Calu3 (cell line): ENCODE measurements at regions of chr1 and their contacts with region 1.

Region 1: DNA sequence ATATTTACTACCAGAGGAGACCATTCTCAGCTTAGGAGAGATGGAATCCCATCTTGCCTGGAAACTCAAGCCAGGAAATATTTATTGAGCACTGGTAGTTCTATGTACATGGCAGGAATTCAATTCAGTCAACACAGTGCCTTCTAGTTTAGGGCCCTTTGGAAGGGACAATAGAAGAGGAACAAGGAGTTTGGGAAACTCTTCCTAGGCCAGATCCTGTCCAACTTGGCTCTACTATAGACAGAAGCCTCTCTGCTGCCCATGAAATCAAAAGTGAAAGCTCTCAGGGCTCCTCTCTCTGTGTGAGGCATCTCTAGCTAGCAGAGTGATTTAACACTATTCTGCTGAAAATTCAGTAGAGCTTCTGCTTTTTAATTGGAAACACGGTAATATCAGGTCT is 244.6 kb upstream of the MAP1LC3C start:
- DNase-seq: no peak
- H3K4me3 Mint-ChIP-seq: no peak overlapping the region
- H3K27ac Mint-ChIP-seq: no peak overlapping the region
- H3K4me1 Mint-ChIP-seq: peaks cover 11% of the 10 kb centered on the region
- H3K27me3 Mint-ChIP-seq: no peaks in the 10 kb centered on the region
- CTCF ChIP-seq: no peak

Region 2: DNA sequence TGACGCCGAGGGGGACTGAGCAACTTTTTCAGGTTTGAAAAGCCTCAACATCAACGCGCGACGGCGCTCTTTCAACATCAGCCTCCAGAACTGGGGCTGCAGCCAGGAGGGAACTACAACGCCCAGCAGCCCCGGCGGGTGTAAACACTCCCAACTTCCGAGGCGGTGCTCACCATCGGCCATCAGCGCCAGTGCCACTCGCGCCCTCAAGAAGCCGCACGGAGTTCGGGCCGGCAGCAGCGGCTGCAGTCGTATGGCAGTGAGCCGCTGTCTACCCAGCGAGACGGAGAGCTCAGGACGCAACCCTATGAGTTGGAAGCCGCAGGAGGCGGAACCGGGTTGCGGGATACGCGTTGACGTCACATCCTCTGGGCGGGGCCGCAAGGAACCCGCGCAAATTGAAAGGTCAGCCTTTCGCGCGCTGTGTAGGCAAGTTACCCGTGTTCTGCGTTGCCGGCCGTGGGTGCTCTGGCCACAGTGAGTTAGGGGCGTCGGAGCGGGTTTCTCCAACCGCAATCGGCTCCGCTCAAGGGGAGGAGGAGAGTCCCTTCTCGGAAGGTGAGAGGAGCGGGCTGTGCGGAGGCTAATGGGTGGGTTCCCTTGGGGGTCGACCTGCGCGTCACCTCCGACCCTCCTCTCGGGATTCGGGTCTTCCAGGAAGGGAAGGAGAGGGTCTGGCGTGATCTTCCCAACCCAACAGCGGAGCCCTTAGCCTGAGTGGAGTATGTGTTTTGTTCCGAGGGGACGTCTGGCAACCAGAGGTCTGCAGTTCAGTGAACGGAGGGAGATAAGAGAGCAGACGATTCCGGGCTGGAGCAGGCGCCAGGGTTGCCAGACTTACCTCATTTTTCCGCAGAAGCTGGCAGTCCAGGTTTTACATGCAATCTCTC is 395.4 kb before region 1 on chr1 and contains the start of gene EXO1:
- CTCF ChIA-PET with region 1: no interaction called
- intact Hi-C with region 1: no loop called
- DNase-seq: peak; percentile 90
- H3K4me3 Mint-ChIP-seq: peak within 1 kb of the TSS; percentile 100
- H3K27ac Mint-ChIP-seq: peak within 1 kb of the TSS; percentile 93
- H3K4me1 Mint-ChIP-seq: peaks cover 31% of the 10 kb centered on the region
- H3K27me3 Mint-ChIP-seq: no peaks in the 10 kb centered on the region
- CTCF ChIP-seq: no peak
- total RNA-seq, gene EXO1: 19.9 and 36.3 TPM in 2 replicates

Region 3: DNA sequence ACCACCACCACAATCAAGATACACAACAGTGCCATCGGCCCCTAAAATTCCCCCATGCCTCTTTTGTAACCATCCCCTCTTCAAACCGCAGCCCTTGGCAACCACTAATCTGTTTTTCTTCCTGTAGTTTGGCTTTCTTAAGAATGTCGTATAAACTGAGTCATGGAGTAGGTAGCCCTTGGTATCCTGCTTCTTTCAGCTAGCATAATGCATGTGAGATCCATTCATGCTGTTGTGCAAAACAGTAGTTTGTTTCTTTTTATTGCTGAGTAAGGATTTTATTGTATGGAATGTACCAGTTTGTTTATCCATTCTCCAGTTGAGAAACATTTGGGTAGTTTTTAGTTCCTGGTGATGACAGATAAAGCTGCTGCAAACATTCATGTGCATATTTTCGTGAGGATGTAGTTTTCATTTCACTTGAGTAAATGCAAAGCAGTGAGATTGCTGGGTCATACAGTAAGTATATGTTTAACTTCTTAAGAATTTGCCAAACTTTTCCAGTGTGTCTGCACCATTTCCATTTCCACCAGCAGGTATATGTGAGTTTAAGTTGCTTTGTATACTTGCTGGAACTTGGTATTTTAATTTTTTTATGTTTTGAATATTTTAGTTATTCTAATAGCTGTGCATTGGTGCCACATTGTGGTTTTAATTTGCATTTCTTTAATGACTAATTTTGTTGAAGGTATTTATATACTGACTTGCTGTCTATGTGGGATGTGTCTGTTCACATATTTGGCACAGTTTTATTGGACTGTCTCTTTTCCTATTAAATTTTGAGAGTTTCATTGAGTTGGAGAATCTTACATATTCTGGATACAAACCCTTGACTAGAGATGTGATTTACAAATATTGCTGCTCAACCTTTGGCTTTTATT is 96.1 kb before region 1 on chr1:
- CTCF ChIA-PET with region 1: no interaction called
- intact Hi-C with region 1: loop called (anchors 5 kb)
- DNase-seq: peak; percentile 10
- H3K4me3 Mint-ChIP-seq: peak overlapping the region; percentile 24
- H3K27ac Mint-ChIP-seq: no peak overlapping the region
- H3K4me1 Mint-ChIP-seq: no peaks in the 10 kb centered on the region
- H3K27me3 Mint-ChIP-seq: no peaks in the 10 kb centered on the region
- CTCF ChIP-seq: no peak